CD4-positive, alpha-beta T cell (primary cell): ENCODE measurements at regions of chr1 and their contacts with region 1.

Region 1: DNA sequence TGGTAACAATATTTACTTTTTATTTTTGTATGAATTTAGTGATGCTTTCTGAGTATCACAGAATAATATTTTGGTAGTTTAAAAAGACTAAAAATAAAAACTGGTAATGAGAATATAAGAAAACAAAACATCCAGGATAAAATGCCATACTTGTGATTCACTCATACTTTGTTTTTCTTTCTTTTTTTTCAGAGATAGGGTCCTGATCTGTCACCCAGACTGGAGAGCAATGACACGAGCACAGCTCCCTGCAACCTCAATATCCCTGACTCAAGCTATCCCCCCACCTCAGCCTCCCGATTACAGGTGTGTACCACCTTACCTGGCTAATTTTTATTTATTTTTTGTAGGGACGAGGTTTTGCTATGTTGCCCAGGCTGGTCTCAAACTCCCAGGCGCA is 64.2 kb upstream of the ADAM30 start:
- DNase-seq: no peak
- ATAC-seq: no peak
- H3K4me3 ChIP-seq: no peak overlapping the region
- H3K4me3 Mint-ChIP-seq: no peak overlapping the region
- H3K27ac ChIP-seq: no peak overlapping the region
- H3K27ac Mint-ChIP-seq: no peak overlapping the region
- H3K4me1 ChIP-seq: no peaks in the 10 kb centered on the region
- H3K4me1 Mint-ChIP-seq: no peaks in the 10 kb centered on the region
- H3K27me3 ChIP-seq: no peaks in the 10 kb centered on the region
- H3K27me3 Mint-ChIP-seq: no peaks in the 10 kb centered on the region
- CTCF ChIP-seq: no peak

Region 2: GRCh38 chr1:119052267-119052666 is 908.2 kb before region 1 on chr1:
- CTCF ChIA-PET with region 1: no interaction called
- POLR2A ChIA-PET with region 1: no interaction called
- intact Hi-C with region 1: no loop called
- DNase-seq: no peak
- ATAC-seq: no peak
- H3K4me3 ChIP-seq: no peak overlapping the region
- H3K4me3 Mint-ChIP-seq: no peak overlapping the region
- H3K27ac ChIP-seq: no peak overlapping the region
- H3K27ac Mint-ChIP-seq: no peak overlapping the region
- H3K4me1 ChIP-seq: no peaks in the 10 kb centered on the region
- H3K4me1 Mint-ChIP-seq: no peaks in the 10 kb centered on the region
- H3K27me3 ChIP-seq: no peaks in the 10 kb centered on the region
- H3K27me3 Mint-ChIP-seq: no peaks in the 10 kb centered on the region
- CTCF ChIP-seq: no peak

Region 3: DNA sequence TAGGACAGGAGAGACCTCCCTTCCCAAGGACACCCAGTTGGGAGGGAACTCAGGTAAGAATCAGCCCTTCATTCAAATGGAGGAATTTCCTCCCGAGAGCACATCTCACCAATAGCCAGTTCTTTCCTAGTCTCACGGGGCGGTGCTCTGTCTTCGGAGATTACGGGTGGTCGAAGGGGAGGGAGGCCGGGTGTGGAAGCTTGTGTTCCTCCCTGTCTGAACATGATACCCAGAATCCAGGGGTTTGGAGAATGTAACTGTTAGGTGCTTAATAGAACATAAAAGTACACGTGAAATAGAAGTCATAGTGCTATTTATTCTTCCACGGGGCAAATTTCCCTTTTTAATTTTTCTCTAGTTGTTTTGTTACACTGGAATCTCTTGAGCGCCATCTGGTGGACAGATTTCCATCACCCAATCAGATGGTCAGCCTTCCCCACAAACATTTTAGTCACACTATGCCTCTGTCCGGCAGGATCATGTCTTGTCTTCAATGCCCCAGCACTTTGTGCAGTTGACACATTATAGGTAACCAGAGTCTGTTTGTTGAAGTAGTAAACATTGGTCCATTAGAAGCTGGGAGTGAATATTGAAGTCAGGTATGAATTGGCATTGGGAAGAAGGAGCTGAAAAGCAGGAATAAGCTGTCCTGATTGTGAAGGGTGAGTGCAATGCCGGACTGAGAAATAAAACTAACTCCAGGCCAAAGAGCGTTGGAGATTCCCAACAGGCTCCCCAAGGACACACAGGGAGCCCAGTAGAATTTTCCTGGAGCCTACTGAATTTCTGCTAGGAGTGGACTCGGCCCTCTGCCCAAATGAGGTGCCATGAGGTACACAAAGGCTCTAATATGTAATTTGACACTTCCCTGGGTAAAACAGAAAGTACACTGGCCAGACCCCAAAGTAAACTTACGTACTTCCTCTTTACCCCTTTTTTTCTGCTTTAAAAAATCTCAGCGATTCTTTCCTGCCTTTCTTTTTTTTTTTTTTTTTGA is 284.9 kb before region 1 on chr1:
- CTCF ChIA-PET with region 1: no interaction called
- POLR2A ChIA-PET with region 1: no interaction called
- intact Hi-C with region 1: no loop called
- DNase-seq: peak; percentile 6 to 79 (median 46)
- ATAC-seq: no peak
- H3K4me3 ChIP-seq: peak overlapping the region; percentile 17
- H3K4me3 Mint-ChIP-seq: peak overlapping the region; percentile 52
- H3K27ac ChIP-seq: no peak overlapping the region
- H3K27ac Mint-ChIP-seq: no peak overlapping the region
- H3K4me1 ChIP-seq: peaks cover 5% of the 10 kb centered on the region
- H3K4me1 Mint-ChIP-seq: peaks cover 6% of the 10 kb centered on the region
- H3K27me3 ChIP-seq: peaks cover 4 to 15% of the 10 kb centered on the region in 2 experiments
- H3K27me3 Mint-ChIP-seq: peaks cover 28% of the 10 kb centered on the region
- CTCF ChIP-seq: peak; percentile 86

Region 4: GRCh38 chr1:119981986-119982815 is 21.7 kb after region 1 on chr1:
- CTCF ChIA-PET with region 1: no interaction called
- POLR2A ChIA-PET with region 1: no interaction called
- intact Hi-C with region 1: loop called in 1 of 2 experiments (anchors 2 kb)
- DNase-seq: no peak
- ATAC-seq: no peak
- H3K4me3 ChIP-seq: no peak overlapping the region
- H3K4me3 Mint-ChIP-seq: no peak overlapping the region
- H3K27ac ChIP-seq: no peak overlapping the region
- H3K27ac Mint-ChIP-seq: no peak overlapping the region
- H3K4me1 ChIP-seq: no peaks in the 10 kb centered on the region
- H3K4me1 Mint-ChIP-seq: peaks cover 15% of the 10 kb centered on the region
- H3K27me3 ChIP-seq: no peaks in the 10 kb centered on the region
- H3K27me3 Mint-ChIP-seq: no peaks in the 10 kb centered on the region
- CTCF ChIP-seq: no peak